GM12878 (cell line): ENCODE measurements at regions of chr1 and their contacts with region 1.

Region 1: DNA sequence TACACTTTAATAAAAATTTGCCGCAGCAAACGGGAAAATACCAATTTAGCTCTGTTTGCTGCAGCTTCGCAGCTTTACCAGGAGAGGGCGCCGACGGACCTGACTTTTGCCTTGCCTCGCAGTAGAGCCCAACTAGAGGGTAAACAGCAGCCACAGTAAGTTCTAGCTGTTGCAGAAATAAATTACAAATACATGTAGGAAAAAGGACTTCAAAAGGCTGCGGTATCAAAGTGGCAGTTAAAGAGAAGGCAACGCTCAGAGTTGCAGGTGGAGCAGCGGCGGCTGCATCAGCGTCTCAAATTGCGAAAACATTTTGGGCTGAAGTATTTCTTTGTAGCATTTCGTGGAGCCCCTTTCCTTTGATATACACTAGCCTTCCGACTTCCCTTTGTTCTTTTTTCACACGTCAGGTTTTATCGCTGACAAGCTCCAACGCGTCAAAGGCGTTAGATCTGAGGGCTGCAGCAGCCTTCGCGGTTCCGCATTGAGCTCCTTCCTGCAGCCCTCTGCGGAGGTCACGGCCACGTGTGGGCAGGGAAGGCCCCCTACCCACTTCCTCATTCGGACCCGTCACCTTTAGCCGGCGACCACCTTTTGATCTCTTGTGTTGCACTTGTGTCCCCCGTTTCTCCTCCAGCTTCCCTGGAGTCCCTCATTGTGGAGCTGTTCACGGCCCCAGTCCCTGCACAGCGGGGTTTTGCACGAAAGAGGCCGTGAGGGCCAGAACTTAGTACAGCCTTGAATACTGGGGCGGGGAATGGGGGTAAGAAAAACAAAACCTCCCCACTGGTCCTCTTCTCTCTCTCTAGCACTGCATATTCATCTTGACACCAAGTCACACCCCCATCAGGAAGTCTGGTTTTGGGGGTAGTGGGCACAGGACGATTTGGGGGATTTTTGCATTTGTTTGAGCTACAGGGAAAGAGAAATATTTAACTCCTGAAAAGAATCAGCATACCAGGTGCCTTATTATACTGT is 72.8 kb downstream of the S1PR1 start:
- DNase-seq: no peak
- ATAC-seq: peak; percentile 79
- H3K4me3 ChIP-seq: peak overlapping the region; percentile 50
- H3K27ac ChIP-seq: peak overlapping the region; percentile 93
- H3K4me1 ChIP-seq: peaks cover 56% of the 10 kb centered on the region
- H3K27me3 ChIP-seq: no peaks in the 10 kb centered on the region
- CTCF ChIP-seq: peak; percentile 88 to 93 (median 92)
- EP300 ChIP-seq: peak; percentile 70 to 88; a peak in 3 of 4 replicates
- POLR2A ChIP-seq: peak; percentile 82
- RAD21 ChIP-seq: peak; percentile 88

Region 2: GRCh38 chr1:101262630-101263348 is 46.8 kb before region 1 on chr1:
- CTCF ChIA-PET with region 1: no interaction called
- POLR2A ChIA-PET with region 1: no interaction called
- RAD21 ChIA-PET with region 1: no interaction called
- SMC1A ChIA-PET with region 1: no interaction called
- in situ Hi-C with region 1: no loop called
- intact Hi-C with region 1: no loop called
- DNase-seq: no peak
- ATAC-seq: peak; percentile 12; the same call in 2 of the 3 replicates
- H3K4me3 ChIP-seq: no peak overlapping the region
- H3K27ac ChIP-seq: no peak overlapping the region
- H3K4me1 ChIP-seq: peaks cover 8% of the 10 kb centered on the region
- H3K27me3 ChIP-seq: no peaks in the 10 kb centered on the region
- CTCF ChIP-seq: no peak
- EP300 ChIP-seq: no peak
- POLR2A ChIP-seq: no peak
- RAD21 ChIP-seq: no peak

Region 3: DNA sequence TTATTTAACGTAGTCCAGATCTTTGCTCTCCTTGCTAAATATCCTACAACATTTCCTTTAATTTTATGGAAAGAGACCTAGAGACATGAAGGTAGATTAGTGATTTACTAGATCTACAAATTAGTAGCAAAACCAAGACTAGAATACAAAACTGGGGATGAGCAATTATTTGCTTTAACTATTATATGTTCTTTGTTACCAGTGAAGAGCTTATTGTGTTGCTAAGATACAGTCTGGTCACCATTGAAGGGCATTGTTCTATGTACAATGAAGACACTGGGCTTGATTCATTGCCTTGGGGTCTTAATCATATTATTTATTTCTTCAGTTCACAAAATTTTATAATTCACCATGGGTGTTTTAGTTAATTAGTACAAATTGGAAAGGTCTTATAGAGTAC is 15.5 kb after region 1 on chr1:
- CTCF ChIA-PET with region 1: interaction called, 30 read pairs
- POLR2A ChIA-PET with region 1: interaction called, 10 read pairs
- RAD21 ChIA-PET with region 1: interaction called, 35 read pairs
- SMC1A ChIA-PET with region 1: interaction called, 66 read pairs
- in situ Hi-C with region 1: no loop called
- intact Hi-C with region 1: loop called (anchors 2 kb)
- DNase-seq: no peak
- ATAC-seq: no peak
- H3K4me3 ChIP-seq: no peak overlapping the region
- H3K27ac ChIP-seq: no peak overlapping the region
- H3K4me1 ChIP-seq: no peaks in the 10 kb centered on the region
- H3K27me3 ChIP-seq: no peaks in the 10 kb centered on the region
- CTCF ChIP-seq: no peak
- EP300 ChIP-seq: no peak
- POLR2A ChIP-seq: no peak
- RAD21 ChIP-seq: no peak

Region 4: GRCh38 chr1:101357444-101357986 is 47.9 kb after region 1 on chr1:
- CTCF ChIA-PET with region 1: interaction called, 118 read pairs
- POLR2A ChIA-PET with region 1: interaction called, 16 read pairs
- RAD21 ChIA-PET with region 1: interaction called, 181 read pairs
- SMC1A ChIA-PET with region 1: interaction called, 113 read pairs
- in situ Hi-C with region 1: loop called (anchors 5 kb)
- intact Hi-C with region 1: loop called (anchors 1 kb)
- DNase-seq: peak; percentile 95
- ATAC-seq: peak; percentile 99
- H3K4me3 ChIP-seq: no peak overlapping the region
- H3K27ac ChIP-seq: peak overlapping the region; percentile 75
- H3K4me1 ChIP-seq: peaks cover 7% of the 10 kb centered on the region; the same call in 1 of the 2 replicates
- H3K27me3 ChIP-seq: no peaks in the 10 kb centered on the region
- CTCF ChIP-seq: peak; percentile 79 to 92 (median 89)
- EP300 ChIP-seq: no peak
- POLR2A ChIP-seq: no peak
- RAD21 ChIP-seq: peak; percentile 93

Region 5: GRCh38 chr1:101379950-101380349 is 70.3 kb after region 1 on chr1:
- CTCF ChIA-PET with region 1: interaction called, 16 read pairs
- POLR2A ChIA-PET with region 1: interaction called, 10 read pairs
- RAD21 ChIA-PET with region 1: interaction called, 45 read pairs
- SMC1A ChIA-PET with region 1: interaction called, 29 read pairs
- in situ Hi-C with region 1: no loop called
- intact Hi-C with region 1: no loop called
- DNase-seq: peak; percentile 80
- ATAC-seq: peak; percentile 95
- H3K4me3 ChIP-seq: 0 out of 2 replicates have a peak overlapping the region, but pooled peaks have one; percentile 16
- H3K27ac ChIP-seq: peak overlapping the region; percentile 91
- H3K4me1 ChIP-seq: peaks cover 32% of the 10 kb centered on the region
- H3K27me3 ChIP-seq: no peaks in the 10 kb centered on the region
- CTCF ChIP-seq: no peak
- EP300 ChIP-seq: no peak
- POLR2A ChIP-seq: no peak
- RAD21 ChIP-seq: 0 out of 2 replicates have a peak, but pooled peaks have one; percentile 2

Region 6: GRCh38 chr1:101399222-101399621 is 89.6 kb after region 1 on chr1:
- CTCF ChIA-PET with region 1: interaction called, 23 read pairs
- POLR2A ChIA-PET with region 1: interaction called, 103 read pairs
- RAD21 ChIA-PET with region 1: interaction called, 33 read pairs
- SMC1A ChIA-PET with region 1: interaction called, 16 read pairs
- in situ Hi-C with region 1: no loop called
- intact Hi-C with region 1: no loop called
- DNase-seq: no peak
- ATAC-seq: peak; percentile 14
- H3K4me3 ChIP-seq: no peak overlapping the region
- H3K27ac ChIP-seq: peak overlapping the region; percentile 74
- H3K4me1 ChIP-seq: peaks cover 13% of the 10 kb centered on the region; the same call in 1 of the 2 replicates
- H3K27me3 ChIP-seq: no peaks in the 10 kb centered on the region
- CTCF ChIP-seq: no peak
- EP300 ChIP-seq: no peak
- POLR2A ChIP-seq: no peak
- RAD21 ChIP-seq: no peak

Region 7: GRCh38 chr1:101451888-101452287 is 142.3 kb after region 1 on chr1:
- CTCF ChIA-PET with region 1: interaction called, 3 read pairs
- POLR2A ChIA-PET with region 1: no interaction called
- RAD21 ChIA-PET with region 1: interaction called, 14 read pairs
- SMC1A ChIA-PET with region 1: interaction called, 14 read pairs
- in situ Hi-C with region 1: no loop called
- intact Hi-C with region 1: no loop called
- DNase-seq: no peak
- ATAC-seq: peak; percentile 78
- H3K4me3 ChIP-seq: no peak overlapping the region
- H3K27ac ChIP-seq: peak overlapping the region; percentile 77
- H3K4me1 ChIP-seq: peaks cover 44% of the 10 kb centered on the region
- H3K27me3 ChIP-seq: no peaks in the 10 kb centered on the region
- CTCF ChIP-seq: no peak
- EP300 ChIP-seq: no peak
- POLR2A ChIP-seq: no peak
- RAD21 ChIP-seq: no peak

Region 8: GRCh38 chr1:101567582-101568189 is 258.1 kb after region 1 on chr1:
- CTCF ChIA-PET with region 1: interaction called, 3 read pairs
- POLR2A ChIA-PET with region 1: no interaction called
- RAD21 ChIA-PET with region 1: no interaction called
- SMC1A ChIA-PET with region 1: interaction called, 3 read pairs
- in situ Hi-C with region 1: no loop called
- intact Hi-C with region 1: loop called (anchors 2 kb)
- DNase-seq: no peak
- ATAC-seq: peak; percentile 96
- H3K4me3 ChIP-seq: no peak overlapping the region
- H3K27ac ChIP-seq: no peak overlapping the region
- H3K4me1 ChIP-seq: no peaks in the 10 kb centered on the region
- H3K27me3 ChIP-seq: no peaks in the 10 kb centered on the region
- CTCF ChIP-seq: peak; percentile 75 to 98 (median 97)
- EP300 ChIP-seq: no peak
- POLR2A ChIP-seq: no peak
- RAD21 ChIP-seq: peak; percentile 69